Posterior cingulate gyrus (tissue), 11 donors: ENCODE measurements at regions of chr6 and their contacts with region 1.

Region 1: DNA sequence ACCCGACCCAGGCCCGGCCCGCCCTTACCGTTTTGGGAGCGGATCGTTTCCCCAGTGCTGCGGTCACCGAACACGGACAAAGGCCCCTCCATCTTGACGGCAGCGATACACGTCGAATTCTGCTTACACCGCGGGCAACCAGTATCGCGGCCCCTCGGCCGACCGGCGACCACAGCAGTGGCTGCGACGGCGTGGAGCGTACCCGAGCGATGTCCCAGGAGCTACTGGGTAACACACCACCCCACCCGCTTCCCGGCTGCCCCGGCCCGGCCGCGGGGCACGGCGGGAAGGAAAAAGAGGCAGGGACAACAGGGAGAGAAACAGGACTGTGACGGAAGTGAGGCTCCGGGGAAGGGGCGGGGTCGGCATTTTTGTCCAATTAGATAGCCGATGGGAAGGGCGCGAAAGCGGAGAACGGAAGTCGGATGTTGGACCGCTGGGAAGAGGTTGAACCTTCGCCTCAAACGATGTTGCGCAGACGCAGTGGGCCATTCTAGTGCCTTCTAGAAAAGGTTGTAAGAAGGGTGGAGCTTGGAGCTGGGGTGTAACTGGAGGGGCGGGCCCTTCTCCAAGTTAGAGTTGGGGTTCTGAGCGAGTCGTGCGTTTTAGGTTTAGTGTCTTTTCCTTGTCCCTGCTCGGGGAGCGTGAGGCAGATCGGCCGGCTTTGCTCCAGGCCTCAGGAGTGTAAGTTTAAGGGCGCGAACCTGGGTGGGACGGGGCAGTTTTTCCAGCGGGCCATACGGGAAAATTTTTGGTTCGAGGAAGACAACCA is at the start of gene TCP1:
- DNase-seq: peak; percentile 98 to 100 (median 99)

Region 2: GRCh38 chr6:159726918-159727716 is 62.4 kb before region 1 on chr6 and contains the start of gene WTAP:
- intact Hi-C with region 1: loop called (anchors 2 kb)
- DNase-seq: peak; percentile 92 to 99 (median 94)

Region 3: DNA sequence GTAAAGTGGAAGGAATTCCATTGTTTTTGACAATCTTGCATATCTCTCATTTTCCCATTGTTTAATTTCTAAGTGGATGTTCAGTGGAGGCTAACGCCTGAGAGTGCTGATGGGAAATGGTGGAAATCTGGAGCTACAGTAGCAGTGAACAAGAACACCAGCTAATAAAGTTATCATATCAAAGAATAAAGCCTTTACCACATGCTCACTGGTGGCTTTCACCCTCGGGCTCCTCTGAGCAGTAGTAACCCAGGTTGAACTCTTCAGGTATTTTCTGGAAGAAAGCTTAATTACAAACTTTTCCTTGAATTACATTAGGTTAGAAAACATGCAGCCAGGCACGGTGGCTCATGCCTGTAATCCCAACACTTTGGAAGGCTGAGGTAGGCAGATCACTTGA is 38.1 kb before region 1 on chr6:
- intact Hi-C with region 1: no loop called
- DNase-seq: no peak

Region 4: DNA sequence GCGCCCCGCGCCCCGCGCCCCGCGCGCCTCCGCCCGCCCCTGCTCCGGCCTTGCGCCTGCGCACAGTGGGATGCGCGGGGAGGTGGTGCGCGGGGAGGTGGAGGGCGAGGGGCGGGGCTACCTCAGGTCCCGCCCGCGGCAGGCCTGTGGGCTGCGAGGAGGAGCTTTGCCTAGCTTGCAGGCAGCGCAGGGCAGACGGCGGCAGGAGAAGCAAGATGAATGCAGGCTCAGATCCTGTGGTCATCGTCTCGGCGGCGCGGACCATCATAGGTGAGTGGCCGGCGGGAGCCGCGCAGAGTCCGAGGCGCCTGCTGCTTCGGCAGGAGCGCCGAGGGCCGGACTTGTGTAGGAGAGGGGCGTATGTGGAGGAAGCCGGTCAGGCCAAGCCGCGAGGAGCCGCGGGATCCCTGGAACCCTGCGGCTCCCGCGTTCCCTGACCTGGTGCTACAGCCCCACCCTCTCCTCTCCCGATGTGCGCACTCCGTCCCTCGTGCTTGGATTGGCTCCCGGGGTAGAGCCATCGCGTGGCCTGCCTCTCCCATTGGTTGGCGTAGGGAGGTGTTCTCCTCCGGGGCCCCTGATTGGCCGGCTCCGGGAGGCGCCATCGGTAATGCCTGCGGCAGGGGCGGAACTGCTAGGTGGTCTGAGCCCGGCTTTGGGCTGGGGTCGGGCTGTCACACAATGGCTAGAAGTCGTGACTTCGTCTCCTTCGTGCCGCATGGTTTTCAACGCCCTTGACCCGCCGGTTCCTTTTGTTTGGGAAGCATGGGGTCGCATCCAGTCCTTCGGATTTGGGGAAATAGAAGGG is 27.5 kb before region 1 on chr6 and contains the start of gene ACAT2:
- intact Hi-C with region 1: loop called (anchors 2 kb)
- DNase-seq: peak; percentile 97 to 100 (median 99)

Region 5: DNA sequence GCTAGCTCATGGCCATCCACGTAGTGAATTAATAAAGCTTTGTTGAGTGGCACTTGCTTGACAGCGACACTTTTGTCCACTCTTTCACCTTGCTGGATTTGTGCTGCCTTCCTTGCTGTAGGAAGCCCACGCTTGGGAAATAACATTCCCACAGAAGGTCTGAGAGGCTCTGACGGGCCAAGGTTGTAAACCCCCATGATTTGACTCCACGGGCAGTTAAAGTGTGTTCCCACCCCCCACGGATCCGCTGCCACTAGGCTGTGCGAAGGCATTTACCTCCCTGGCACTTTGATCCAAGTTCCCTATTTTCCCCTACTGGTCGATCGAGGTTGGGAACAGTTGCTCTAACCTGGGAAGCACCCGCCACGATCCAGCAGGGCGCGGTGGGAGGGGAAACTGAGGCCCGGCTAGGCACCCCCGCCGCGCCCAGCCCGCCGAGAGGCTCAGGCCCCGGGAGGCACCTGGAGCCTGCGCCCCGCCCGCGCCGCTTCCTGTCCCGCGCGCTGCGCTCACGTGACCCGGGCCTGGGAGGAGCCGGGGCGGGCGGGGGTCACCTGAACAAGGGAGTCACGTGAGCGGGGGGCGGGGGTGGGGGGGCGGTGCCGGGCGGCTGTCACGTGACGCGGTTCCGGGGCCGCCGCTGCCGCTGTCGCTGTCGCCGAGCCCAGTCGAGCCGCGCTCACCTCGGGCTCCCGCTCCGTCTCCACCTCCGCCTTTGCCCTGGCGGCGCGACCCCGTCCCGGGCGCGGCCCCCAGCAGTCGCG is 179.1 kb after region 1 on chr6 and contains the start of gene IGF2R:
- intact Hi-C with region 1: loop called (anchors 5 kb)
- DNase-seq: peak; percentile 73 to 98 (median 87)